PC-3 (cell line): ENCODE measurements at regions of chr10 and their contacts with region 1.

Region 1: GRCh38 chr10:59240582-59241183 is 64.2 kb downstream of the PHYHIPL start:
- DNase-seq: peak; percentile 79
- ATAC-seq: no peak; the same call in 1 of the 2 replicates
- H3K4me3 ChIP-seq: no peak overlapping the region
- H3K27ac ChIP-seq: no peak overlapping the region
- H3K4me1 ChIP-seq: no peaks in the 10 kb centered on the region
- H3K27me3 ChIP-seq: peaks cover 19% of the 10 kb centered on the region
- CTCF ChIP-seq: peak; percentile 93

Region 2: GRCh38 chr10:58662314-58662713 is 578.4 kb before region 1 on chr10:
- CTCF ChIA-PET with region 1: no interaction called
- POLR2A ChIA-PET with region 1: no interaction called
- intact Hi-C with region 1: no loop called
- DNase-seq: peak; percentile 85
- ATAC-seq: peak; percentile 44
- H3K4me3 ChIP-seq: no peak overlapping the region
- H3K27ac ChIP-seq: no peak overlapping the region
- H3K4me1 ChIP-seq: peaks cover 22% of the 10 kb centered on the region
- H3K27me3 ChIP-seq: no peaks in the 10 kb centered on the region
- CTCF ChIP-seq: no peak

Region 3: DNA sequence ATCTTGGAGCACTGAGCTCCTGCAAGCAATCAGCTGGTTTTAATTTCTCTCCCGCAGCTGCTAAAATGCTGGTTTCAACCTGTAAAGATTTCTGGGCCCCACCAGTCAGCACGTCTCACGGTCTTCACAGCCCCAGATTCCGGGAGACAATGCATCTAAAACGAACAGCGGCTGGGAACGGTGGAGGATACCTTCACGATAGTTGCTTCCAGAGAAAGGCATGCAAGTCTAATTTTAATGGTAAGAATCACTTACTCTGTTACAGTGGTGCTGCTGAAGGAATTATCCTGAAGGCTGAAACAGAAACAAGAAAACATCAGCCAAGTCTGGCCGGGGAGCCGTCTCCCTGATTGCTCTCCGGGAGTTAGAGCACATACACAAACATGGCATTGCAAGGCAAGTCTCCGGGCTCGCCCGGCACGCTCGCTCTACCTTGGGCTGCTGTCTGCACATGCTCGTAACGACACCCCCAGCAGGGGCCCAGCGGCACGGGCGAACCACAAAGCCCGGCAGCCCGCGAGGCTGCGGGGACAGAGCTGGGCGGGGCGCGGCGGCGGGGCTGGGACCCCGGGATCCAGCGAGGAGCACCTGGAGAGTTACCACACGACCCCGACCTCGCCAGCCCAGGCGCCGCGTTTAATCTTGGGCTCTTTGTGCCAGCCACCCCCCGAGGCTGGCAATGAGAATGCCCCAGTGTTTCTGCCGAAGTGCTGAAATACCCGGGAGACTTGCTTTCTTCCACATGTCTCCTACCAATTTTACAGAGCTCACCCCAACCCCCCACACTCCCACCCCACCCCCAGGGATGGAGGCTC is 121.7 kb after region 1 on chr10 and contains the start of gene FAM13C:
- CTCF ChIA-PET with region 1: no interaction called
- POLR2A ChIA-PET with region 1: no interaction called
- intact Hi-C with region 1: loop called (anchors 5 kb)
- DNase-seq: peak; percentile 70
- ATAC-seq: peak; percentile 89
- H3K4me3 ChIP-seq: peak within 1 kb of the TSS; percentile 66
- H3K27ac ChIP-seq: no peak within 1 kb of the TSS
- H3K4me1 ChIP-seq: peaks cover 11% of the 10 kb centered on the region
- H3K27me3 ChIP-seq: peaks cover 22% of the 10 kb centered on the region
- CTCF ChIP-seq: no peak
- total RNA-seq, gene FAM13C: 0.07 and 0.63 TPM in 2 replicates

Region 4: GRCh38 chr10:59465088-59465487 is 224.4 kb after region 1 on chr10:
- CTCF ChIA-PET with region 1: no interaction called
- POLR2A ChIA-PET with region 1: no interaction called
- intact Hi-C with region 1: loop called (anchors 1 kb)
- DNase-seq: peak; percentile 66
- ATAC-seq: peak; percentile 33; the same call in 1 of the 2 replicates
- H3K4me3 ChIP-seq: no peak overlapping the region
- H3K27ac ChIP-seq: no peak overlapping the region
- H3K4me1 ChIP-seq: no peaks in the 10 kb centered on the region
- H3K27me3 ChIP-seq: peaks cover 28% of the 10 kb centered on the region; the same call in 1 of the 2 replicates
- CTCF ChIP-seq: peak; percentile 76

Region 5: DNA sequence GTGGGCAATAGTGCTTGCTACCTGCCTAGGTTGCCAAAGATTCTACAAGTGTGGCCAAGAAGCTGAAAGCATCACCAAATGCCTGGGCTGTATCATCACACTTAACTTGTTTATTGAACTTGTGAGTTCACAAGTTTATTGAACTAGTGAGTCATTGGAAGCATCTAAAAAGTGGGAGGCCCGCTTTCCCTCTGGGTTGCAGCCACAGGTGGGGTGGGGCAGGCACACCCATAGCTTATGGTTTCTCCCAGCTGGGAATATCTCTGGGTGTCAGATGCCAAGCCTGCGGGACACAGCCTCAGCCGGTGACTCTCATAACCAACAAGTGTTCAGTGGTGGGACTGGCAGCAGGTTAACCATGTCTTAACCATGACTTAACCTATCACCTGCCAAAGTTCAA is 267.6 kb after region 1 on chr10:
- CTCF ChIA-PET with region 1: no interaction called
- POLR2A ChIA-PET with region 1: no interaction called
- intact Hi-C with region 1: loop called (anchors 1 kb)
- DNase-seq: peak; percentile 100
- ATAC-seq: peak; percentile 99
- H3K4me3 ChIP-seq: no peak overlapping the region
- H3K27ac ChIP-seq: peak overlapping the region; percentile 71
- H3K4me1 ChIP-seq: peaks cover 36% of the 10 kb centered on the region
- H3K27me3 ChIP-seq: no peaks in the 10 kb centered on the region
- CTCF ChIP-seq: no peak

Region 6: DNA sequence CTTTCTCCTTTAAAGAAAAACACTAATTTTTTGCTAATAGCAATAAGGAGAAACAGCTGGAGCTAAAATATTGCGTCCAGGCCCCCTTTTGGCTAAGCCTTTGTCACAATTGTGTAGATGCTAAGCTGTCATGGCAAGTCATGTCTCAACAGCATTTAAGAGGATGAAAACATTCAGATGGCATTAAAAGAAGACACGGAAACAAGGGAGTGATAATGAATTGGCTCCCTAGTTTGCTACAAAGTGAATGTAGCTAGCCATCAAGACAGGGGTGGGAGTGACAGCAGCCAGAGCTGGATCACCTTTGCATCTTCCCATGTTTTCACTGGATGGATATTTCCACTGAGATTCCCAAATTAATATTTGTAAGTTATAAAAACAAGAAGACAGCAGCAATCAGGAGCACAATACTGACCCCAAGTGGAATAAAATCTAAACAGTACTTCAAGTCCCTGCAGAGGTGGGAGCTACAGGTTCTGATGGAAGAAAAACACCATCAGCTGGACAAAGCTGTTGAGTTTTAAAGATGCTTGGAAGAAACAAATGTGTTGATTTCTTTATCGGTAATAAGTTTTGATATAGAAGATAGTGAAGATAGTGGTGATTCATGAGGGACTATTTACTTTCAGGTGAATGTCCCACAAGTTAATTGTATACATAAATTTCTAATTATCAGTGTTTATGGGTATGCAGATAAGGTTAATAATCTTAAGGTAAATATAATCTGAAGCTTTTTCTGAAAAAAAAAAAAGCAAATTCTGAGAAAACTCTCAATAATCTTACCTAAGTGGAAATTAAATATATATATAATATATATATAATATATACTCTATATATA is 339.6 kb after region 1 on chr10:
- CTCF ChIA-PET with region 1: interaction called, 3 read pairs
- POLR2A ChIA-PET with region 1: no interaction called
- intact Hi-C with region 1: loop called (anchors 1 kb)
- DNase-seq: peak; percentile 79
- ATAC-seq: peak; percentile 64
- H3K4me3 ChIP-seq: no peak overlapping the region
- H3K27ac ChIP-seq: no peak overlapping the region
- H3K4me1 ChIP-seq: peaks cover 21% of the 10 kb centered on the region
- H3K27me3 ChIP-seq: no peaks in the 10 kb centered on the region
- CTCF ChIP-seq: peak; percentile 94

Region 7: DNA sequence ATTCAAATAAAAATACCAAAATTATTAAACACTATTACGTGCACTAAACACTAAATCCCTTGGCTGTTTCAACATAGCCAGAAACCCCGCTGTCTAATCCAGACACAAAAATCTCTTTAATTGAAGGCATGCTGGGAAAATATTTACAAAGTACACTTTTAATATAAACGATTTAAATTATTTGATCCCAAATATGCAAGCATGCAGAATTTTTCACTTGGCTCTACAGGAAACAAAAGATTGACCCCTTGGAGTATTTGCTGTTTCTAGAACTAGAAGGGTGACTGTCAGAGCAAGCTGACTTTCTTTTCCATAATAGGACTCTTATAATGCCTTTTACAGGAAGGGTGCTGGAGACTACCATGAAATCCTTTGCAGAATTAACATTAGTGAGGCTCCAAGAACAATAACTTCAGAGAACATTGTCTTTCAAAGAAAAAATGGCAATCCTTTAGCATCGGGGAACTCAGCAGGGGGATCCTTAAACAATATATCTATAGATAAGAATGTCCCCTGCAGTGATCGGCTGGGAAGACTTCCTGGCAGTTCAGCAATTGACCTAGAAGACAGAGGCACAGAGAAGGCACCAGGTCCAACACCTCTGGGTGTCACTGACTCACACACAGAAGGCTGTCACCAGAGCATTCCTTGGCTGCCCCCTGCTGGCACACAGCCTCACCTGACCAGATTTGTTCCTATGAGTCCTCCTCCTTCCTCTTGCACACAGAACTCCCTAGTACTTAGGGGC is 568.4 kb after region 1 on chr10:
- CTCF ChIA-PET with region 1: no interaction called
- POLR2A ChIA-PET with region 1: no interaction called
- intact Hi-C with region 1: loop called (anchors 5 kb)
- DNase-seq: peak; percentile 93
- ATAC-seq: peak; percentile 96
- H3K4me3 ChIP-seq: no peak overlapping the region
- H3K27ac ChIP-seq: no peak overlapping the region
- H3K4me1 ChIP-seq: no peaks in the 10 kb centered on the region
- H3K27me3 ChIP-seq: no peaks in the 10 kb centered on the region
- CTCF ChIP-seq: peak; percentile 99

Region 8: DNA sequence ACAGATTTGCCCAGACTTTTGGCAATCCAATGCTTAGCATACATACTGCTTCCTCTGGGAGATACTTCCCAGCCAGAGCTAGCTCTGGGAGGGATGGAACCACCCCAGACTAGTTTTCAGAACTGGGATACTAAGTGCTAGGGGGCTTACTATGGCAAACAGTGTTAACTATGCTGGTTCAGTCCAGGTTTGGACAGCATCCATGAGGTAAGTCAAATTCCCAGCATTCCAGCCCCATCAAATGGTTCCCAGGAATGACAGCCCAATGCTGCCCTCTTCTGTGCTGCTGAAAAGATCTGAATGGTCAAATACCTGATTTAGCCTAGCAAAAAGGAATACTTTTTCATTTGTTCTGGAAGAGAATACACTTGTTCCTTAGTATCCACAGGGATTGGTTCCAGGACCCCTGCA is 807.4 kb after region 1 on chr10:
- CTCF ChIA-PET with region 1: no interaction called
- POLR2A ChIA-PET with region 1: no interaction called
- intact Hi-C with region 1: loop called (anchors 10 kb)
- DNase-seq: peak; percentile 87
- ATAC-seq: peak; percentile 82
- H3K4me3 ChIP-seq: no peak overlapping the region
- H3K27ac ChIP-seq: no peak overlapping the region
- H3K4me1 ChIP-seq: peaks cover 15% of the 10 kb centered on the region
- H3K27me3 ChIP-seq: no peaks in the 10 kb centered on the region
- CTCF ChIP-seq: peak; percentile 90